ENCODE measurements at regions of chr6 and their contacts with region 1.

Region 1: GRCh38 chr6:147970975-147971374 is 371.7 kb upstream of the SASH1 start:
- DNase-seq: peak; percentile 14
- H3K4me3 ChIP-seq: no peak overlapping the region
- H3K27ac ChIP-seq: no peak overlapping the region
- H3K4me1 ChIP-seq: peaks cover 13% of the 10 kb centered on the region
- H3K27me3 ChIP-seq: no peaks in the 10 kb centered on the region
- CTCF ChIP-seq: peak; percentile 35 to 52

Region 2: DNA sequence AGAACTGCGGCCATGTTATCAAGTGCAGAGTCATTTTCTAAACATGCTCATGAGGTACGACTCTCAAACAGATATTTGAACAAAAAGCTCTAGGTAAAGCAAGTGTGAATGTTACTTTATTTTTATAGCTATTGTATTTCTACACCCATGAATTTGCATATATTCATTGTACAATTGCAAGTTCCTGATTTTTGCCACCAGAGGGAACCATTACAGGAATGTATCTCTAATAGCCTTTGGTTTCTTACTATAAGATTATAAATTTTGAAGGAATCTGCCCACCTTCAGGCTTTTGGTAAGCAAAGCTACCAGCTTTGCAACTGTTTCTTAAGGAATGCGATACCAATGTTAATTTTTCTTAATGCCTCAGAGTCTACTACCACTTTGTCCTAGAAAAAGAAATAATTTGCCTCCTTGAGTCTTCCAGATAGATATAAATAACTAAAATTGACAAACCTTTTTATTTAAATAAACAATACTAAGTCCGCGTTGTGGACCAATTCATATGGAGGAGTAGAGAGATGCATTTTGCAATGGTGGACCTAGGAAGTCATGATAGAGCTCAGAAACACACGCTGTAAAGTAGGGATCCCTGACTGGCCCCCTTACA is 587.9 kb before region 1 on chr6:
- CTCF ChIA-PET with region 1: no interaction called
- dilution Hi-C with region 1: no loop called
- in situ Hi-C with region 1: no loop called
- intact Hi-C with region 1: loop called (anchors 5 kb)
- DNase-seq: peak; percentile 19
- H3K4me3 ChIP-seq: no peak overlapping the region
- H3K27ac ChIP-seq: no peak overlapping the region
- H3K4me1 ChIP-seq: no peaks in the 10 kb centered on the region
- H3K27me3 ChIP-seq: no peaks in the 10 kb centered on the region
- CTCF ChIP-seq: peak; percentile 51 to 53

Region 3: GRCh38 chr6:147675281-147675680 is 295.7 kb before region 1 on chr6:
- CTCF ChIA-PET with region 1: no interaction called
- dilution Hi-C with region 1: no loop called
- in situ Hi-C with region 1: no loop called
- intact Hi-C with region 1: loop called (anchors 10 kb)
- DNase-seq: peak; percentile 97
- H3K4me3 ChIP-seq: no peak overlapping the region
- H3K27ac ChIP-seq: peak overlapping the region; percentile 80
- H3K4me1 ChIP-seq: peaks cover 20% of the 10 kb centered on the region
- H3K27me3 ChIP-seq: no peaks in the 10 kb centered on the region
- CTCF ChIP-seq: no peak

Region 4: GRCh38 chr6:147774856-147775255 is 196.1 kb before region 1 on chr6:
- CTCF ChIA-PET with region 1: no interaction called
- dilution Hi-C with region 1: no loop called
- in situ Hi-C with region 1: no loop called
- intact Hi-C with region 1: loop called (anchors 2 kb)
- DNase-seq: no peak
- H3K4me3 ChIP-seq: no peak overlapping the region
- H3K27ac ChIP-seq: no peak overlapping the region
- H3K4me1 ChIP-seq: no peaks in the 10 kb centered on the region
- H3K27me3 ChIP-seq: no peaks in the 10 kb centered on the region
- CTCF ChIP-seq: peak; percentile 24 to 25

Region 5: DNA sequence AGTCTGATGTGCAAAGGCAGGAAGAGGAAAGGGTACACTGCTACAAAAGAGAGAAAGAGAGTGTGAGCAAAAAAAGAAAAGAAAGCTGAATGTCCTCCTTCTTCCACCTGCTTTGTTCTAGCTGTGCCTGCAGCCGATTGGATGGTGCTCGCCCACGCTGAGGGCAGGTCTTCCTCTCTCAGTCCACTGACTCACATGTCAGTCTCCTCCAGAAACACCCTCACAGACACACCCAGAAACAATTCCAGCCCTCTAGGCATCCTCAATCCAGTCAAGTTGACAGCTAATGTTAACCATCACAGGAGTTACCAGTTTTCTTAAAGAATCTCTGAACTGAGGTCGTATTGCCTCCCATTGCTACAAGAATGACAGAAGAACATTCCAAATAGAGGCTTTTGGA is 40.2 kb before region 1 on chr6:
- CTCF ChIA-PET with region 1: interaction called, 13 read pairs
- dilution Hi-C with region 1: loop called (anchors 5 kb)
- in situ Hi-C with region 1: no loop called
- intact Hi-C with region 1: no loop called
- DNase-seq: peak; percentile 76
- H3K4me3 ChIP-seq: no peak overlapping the region
- H3K27ac ChIP-seq: no peak overlapping the region
- H3K4me1 ChIP-seq: peaks cover 24% of the 10 kb centered on the region
- H3K27me3 ChIP-seq: no peaks in the 10 kb centered on the region
- CTCF ChIP-seq: no peak

Region 6: GRCh38 chr6:147936703-147937470 is 34.1 kb before region 1 on chr6:
- CTCF ChIA-PET with region 1: no interaction called
- dilution Hi-C with region 1: loop called (anchors 5 kb)
- in situ Hi-C with region 1: no loop called
- intact Hi-C with region 1: no loop called
- DNase-seq: peak; percentile 78
- H3K4me3 ChIP-seq: no peak overlapping the region
- H3K27ac ChIP-seq: peak overlapping the region; percentile 29
- H3K4me1 ChIP-seq: peaks cover 47% of the 10 kb centered on the region
- H3K27me3 ChIP-seq: no peaks in the 10 kb centered on the region
- CTCF ChIP-seq: no peak

Region 7: GRCh38 chr6:148166339-148166968 is 195.5 kb after region 1 on chr6:
- CTCF ChIA-PET with region 1: no interaction called
- dilution Hi-C with region 1: no loop called
- in situ Hi-C with region 1: no loop called
- intact Hi-C with region 1: loop called (anchors 2 kb)
- DNase-seq: peak; percentile 39
- H3K4me3 ChIP-seq: no peak overlapping the region
- H3K27ac ChIP-seq: no peak overlapping the region
- H3K4me1 ChIP-seq: no peaks in the 10 kb centered on the region
- H3K27me3 ChIP-seq: no peaks in the 10 kb centered on the region
- CTCF ChIP-seq: peak; percentile 56 to 66